HEK293T (cell line): ENCODE measurements at regions of chr17 and their contacts with region 1.

Region 1: GRCh38 chr17:29931231-29931932 is 1.4 kb upstream of the SSH2 start:
- DNase-seq: peak; percentile 52

Region 2: GRCh38 chr17:29640413-29640812 is 291.0 kb before region 1 on chr17:
- CTCF ChIA-PET with region 1: interaction called, 25 read pairs
- POLR2A ChIA-PET with region 1: interaction called, 10 read pairs
- DNase-seq: no peak

Region 3: GRCh38 chr17:29807520-29808351 is 123.6 kb before region 1 on chr17:
- CTCF ChIA-PET with region 1: interaction called, 56 read pairs
- POLR2A ChIA-PET with region 1: interaction called, 23 read pairs
- DNase-seq: peak; percentile 46

Region 4: GRCh38 chr17:29867643-29868181 is 63.7 kb before region 1 on chr17:
- CTCF ChIA-PET with region 1: interaction called, 10 read pairs
- POLR2A ChIA-PET with region 1: interaction called, 8 read pairs
- DNase-seq: no peak

Region 5: GRCh38 chr17:29880031-29880430 is 51.4 kb before region 1 on chr17:
- CTCF ChIA-PET with region 1: no interaction called
- POLR2A ChIA-PET with region 1: interaction called, 10 read pairs
- DNase-seq: no peak

Region 6: DNA sequence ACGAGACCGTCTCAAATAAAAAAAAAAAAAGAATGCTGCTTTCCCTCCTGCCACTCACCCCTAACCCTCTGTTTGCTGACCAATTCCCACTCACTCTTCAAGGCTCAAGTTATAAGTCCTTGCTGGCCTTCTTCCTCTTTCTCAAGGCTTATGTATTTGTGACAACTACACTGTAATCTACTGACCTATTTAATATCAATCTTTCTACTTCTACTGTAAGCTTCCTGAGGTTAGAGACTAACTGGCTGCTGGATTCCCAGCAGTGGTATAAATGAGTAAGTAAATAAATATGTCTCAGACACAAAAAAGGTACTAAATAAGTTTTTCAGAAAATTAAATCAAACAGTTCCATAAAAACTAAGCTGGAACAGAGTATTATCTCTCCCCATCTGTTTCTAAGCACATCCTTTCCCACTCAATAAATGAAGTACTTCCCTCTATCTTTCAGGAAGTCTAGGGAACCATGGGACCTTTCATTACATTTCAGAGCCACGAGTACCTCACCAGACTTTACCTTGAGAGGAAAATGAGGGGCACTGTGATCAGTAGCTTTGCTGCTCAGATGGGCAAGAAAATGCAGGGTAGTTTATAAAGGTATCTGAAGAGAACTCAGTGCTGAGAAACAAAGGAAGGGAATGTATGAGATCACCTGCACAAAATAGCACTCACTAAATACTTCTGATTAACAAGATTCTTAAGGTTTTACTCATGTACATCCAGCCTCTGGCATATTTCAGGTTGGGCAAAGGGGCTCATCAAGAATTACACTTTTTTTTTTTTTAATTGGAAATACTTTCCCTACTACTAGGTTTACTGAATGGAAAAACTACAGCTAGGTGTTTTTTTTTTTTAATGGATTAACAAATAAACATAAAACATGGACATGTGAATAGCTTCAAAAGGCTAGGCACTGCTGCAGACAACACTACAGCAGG is 12.2 kb before region 1 on chr17:
- CTCF ChIA-PET with region 1: interaction called, 9 read pairs
- POLR2A ChIA-PET with region 1: interaction called, 13 read pairs
- DNase-seq: no peak

Region 7: GRCh38 chr17:29982991-29983653 is 51.7 kb after region 1 on chr17:
- CTCF ChIA-PET with region 1: no interaction called
- POLR2A ChIA-PET with region 1: no interaction called
- DNase-seq: no peak

Region 8: DNA sequence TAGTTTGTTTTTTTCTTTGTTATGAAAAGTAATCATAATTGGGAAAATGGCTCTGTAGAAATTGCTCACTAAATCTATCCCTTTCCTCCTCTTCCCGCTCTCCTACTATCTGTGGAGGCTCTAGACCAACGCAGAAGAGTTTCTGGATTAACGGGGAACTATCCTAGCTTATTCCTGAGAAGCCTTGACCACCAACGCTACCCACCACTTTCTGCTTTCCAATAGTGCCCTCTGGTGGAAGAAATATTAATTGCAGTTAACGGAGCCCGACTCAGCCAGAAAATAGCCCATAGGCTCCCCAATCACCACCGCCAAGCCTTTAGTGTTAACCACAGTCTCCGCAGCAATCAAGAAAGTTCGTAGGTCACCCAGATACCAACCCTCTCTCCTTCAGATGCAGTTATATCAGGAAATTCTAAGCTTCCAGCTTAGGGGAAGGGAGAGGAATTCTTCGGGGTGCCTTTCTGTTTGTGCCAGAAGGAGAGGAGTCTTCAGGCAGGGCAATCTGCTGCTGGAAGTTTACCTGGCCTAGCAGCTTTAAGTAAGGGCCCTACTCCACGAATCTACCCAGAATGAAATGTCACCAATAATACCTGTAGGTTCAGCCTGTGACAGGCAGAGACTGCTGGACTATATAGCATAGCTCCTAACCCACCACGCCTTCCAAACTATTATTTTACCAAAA is 162.2 kb after region 1 on chr17:
- CTCF ChIA-PET with region 1: interaction called, 13 read pairs
- POLR2A ChIA-PET with region 1: no interaction called
- DNase-seq: peak; percentile 71